Transverse colon (tissue), 4 donors: ENCODE measurements at regions of chr9 and their contacts with region 1.

Region 1: DNA sequence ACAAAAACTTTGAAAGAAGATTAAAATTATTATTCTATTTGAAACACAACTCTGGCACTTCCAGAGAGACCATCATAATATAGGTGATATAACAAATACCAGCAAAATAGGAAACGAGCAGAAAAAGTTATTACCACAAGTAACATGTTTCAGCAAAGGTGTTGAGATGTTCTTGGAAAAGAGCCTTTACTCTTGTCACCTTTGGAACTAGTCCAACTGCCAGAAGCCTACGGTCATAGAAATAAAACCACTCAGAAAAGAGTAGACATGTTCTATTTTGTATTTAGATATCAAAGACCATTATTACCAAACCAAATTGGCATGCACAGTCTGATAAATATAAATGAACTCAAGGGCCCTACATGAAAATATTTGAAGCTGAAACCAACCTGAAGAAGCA is 145.0 kb upstream of the DMAC1 start:
- DNase-seq: no peak
- H3K4me3 ChIP-seq: no peak overlapping the region
- H3K27ac ChIP-seq: no peak overlapping the region
- H3K4me1 ChIP-seq: no peaks in the 10 kb centered on the region
- H3K27me3 ChIP-seq: no peaks in the 10 kb centered on the region
- CTCF ChIP-seq: no peak
- EP300 ChIP-seq: no peak
- POLR2A ChIP-seq: no peak

Region 2: DNA sequence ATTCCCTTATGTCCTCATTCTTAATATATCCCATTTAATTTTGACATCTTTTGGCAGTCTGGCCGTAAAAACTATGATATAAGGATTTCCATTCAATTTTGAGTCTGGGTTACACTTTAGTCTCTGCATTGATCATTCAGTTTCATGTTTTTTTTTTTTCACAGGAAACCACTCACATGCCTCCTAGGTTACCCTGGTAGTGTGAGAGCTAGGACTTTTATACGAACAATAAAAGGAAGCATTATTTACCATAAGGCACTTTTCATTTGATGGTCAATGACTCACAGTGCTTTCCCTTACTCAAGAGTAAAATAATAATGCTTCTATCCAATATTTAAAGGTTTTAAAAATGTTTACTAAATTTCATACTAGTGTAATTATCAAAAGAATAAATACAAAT is 128.6 kb before region 1 on chr9:
- in situ Hi-C with region 1: no loop called
- intact Hi-C with region 1: no loop called
- DNase-seq: no peak
- H3K4me3 ChIP-seq: no peak overlapping the region
- H3K27ac ChIP-seq: no peak overlapping the region
- H3K4me1 ChIP-seq: peaks cover 0 to 21% (median 5%) of the 10 kb centered on the region in 4 donors
- H3K27me3 ChIP-seq: no peaks in the 10 kb centered on the region
- CTCF ChIP-seq: no peak
- EP300 ChIP-seq: no peak
- POLR2A ChIP-seq: no peak

Region 3: GRCh38 chr9:7921545-7922197 is 22.9 kb before region 1 on chr9:
- in situ Hi-C with region 1: no loop called
- intact Hi-C with region 1: loop called (anchors 1 kb)
- DNase-seq: no peak
- H3K4me3 ChIP-seq: no peak overlapping the region
- H3K27ac ChIP-seq: no peak overlapping the region
- H3K4me1 ChIP-seq: peaks cover 0 to 4% (median 1%) of the 10 kb centered on the region in 4 donors
- H3K27me3 ChIP-seq: no peaks in the 10 kb centered on the region
- CTCF ChIP-seq: no peak
- EP300 ChIP-seq: no peak
- POLR2A ChIP-seq: no peak